GM12878 (cell line): ENCODE measurements at regions of chr5 and their contacts with region 1.

Region 1: GRCh38 chr5:142151436-142152383 is 43.1 kb downstream of the NDFIP1 start:
- DNase-seq: peak; percentile 2
- ATAC-seq: peak; percentile 72
- H3K4me3 ChIP-seq: no peak overlapping the region
- H3K27ac ChIP-seq: no peak overlapping the region
- H3K4me1 ChIP-seq: no peaks in the 10 kb centered on the region
- H3K27me3 ChIP-seq: no peaks in the 10 kb centered on the region
- CTCF ChIP-seq: peak; percentile 61 to 85 (median 75); a peak in 5 of 6 replicates
- EP300 ChIP-seq: no peak
- POLR2A ChIP-seq: no peak
- RAD21 ChIP-seq: peak; percentile 82

Region 2: DNA sequence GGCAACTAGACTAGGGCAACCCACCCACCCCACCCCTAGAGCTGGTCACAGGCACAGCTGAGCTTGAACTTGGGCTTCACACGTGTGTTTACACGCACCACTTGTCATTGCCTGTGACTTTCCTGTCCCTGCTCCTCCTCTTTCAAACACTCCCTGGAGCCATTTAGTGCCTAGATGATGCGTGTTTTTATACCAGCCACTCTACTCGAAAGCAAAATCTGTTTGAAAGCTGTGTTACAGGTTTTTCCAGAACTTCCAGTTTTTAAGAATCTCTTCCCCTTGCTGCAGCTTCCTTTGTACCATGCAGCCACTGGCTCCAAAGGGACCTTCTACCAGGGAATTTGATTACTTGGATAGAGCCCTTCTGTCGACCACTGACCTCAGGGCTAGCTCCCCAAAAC is 251.9 kb after region 1 on chr5:
- CTCF ChIA-PET with region 1: no interaction called
- POLR2A ChIA-PET with region 1: no interaction called
- RAD21 ChIA-PET with region 1: no interaction called
- SMC1A ChIA-PET with region 1: interaction called, 3 read pairs
- in situ Hi-C with region 1: no loop called
- intact Hi-C with region 1: loop called (anchors 5 kb)
- DNase-seq: no peak
- ATAC-seq: no peak
- H3K4me3 ChIP-seq: no peak overlapping the region
- H3K27ac ChIP-seq: no peak overlapping the region
- H3K4me1 ChIP-seq: no peaks in the 10 kb centered on the region
- H3K27me3 ChIP-seq: no peaks in the 10 kb centered on the region
- CTCF ChIP-seq: no peak
- EP300 ChIP-seq: no peak
- POLR2A ChIP-seq: no peak
- RAD21 ChIP-seq: no peak

Region 3: GRCh38 chr5:142548739-142549275 is 397.1 kb after region 1 on chr5:
- CTCF ChIA-PET with region 1: interaction called, 18 read pairs
- POLR2A ChIA-PET with region 1: no interaction called
- RAD21 ChIA-PET with region 1: interaction called, 15 read pairs
- SMC1A ChIA-PET with region 1: interaction called, 8 read pairs
- in situ Hi-C with region 1: no loop called
- intact Hi-C with region 1: loop called (anchors 1 kb)
- DNase-seq: peak; percentile 12
- ATAC-seq: peak; percentile 78
- H3K4me3 ChIP-seq: no peak overlapping the region
- H3K27ac ChIP-seq: no peak overlapping the region
- H3K4me1 ChIP-seq: no peaks in the 10 kb centered on the region
- H3K27me3 ChIP-seq: peaks cover 0 to 6% of the 10 kb centered on the region in 2 experiments; a peak in 2 of 4 replicates
- CTCF ChIP-seq: peak; percentile 46 to 53 (median 50); a peak in 5 of 6 replicates
- EP300 ChIP-seq: no peak
- POLR2A ChIP-seq: no peak
- RAD21 ChIP-seq: peak; percentile 31

Region 4: GRCh38 chr5:142611154-142611553 is 459.4 kb after region 1 on chr5:
- CTCF ChIA-PET with region 1: interaction called, 3 read pairs
- POLR2A ChIA-PET with region 1: no interaction called
- RAD21 ChIA-PET with region 1: no interaction called
- SMC1A ChIA-PET with region 1: interaction called, 4 read pairs
- in situ Hi-C with region 1: no loop called
- intact Hi-C with region 1: loop called (anchors 2 kb)
- DNase-seq: no peak
- ATAC-seq: peak; percentile 97
- H3K4me3 ChIP-seq: no peak overlapping the region
- H3K27ac ChIP-seq: no peak overlapping the region
- H3K4me1 ChIP-seq: no peaks in the 10 kb centered on the region
- H3K27me3 ChIP-seq: no peaks in the 10 kb centered on the region; a peak in 4 of 4 replicates
- CTCF ChIP-seq: peak; percentile 68 to 94 (median 71)
- EP300 ChIP-seq: no peak
- POLR2A ChIP-seq: no peak
- RAD21 ChIP-seq: peak; percentile 78